ENCODE measurements at regions of chr19 and their contacts with region 1.

Region 1: DNA sequence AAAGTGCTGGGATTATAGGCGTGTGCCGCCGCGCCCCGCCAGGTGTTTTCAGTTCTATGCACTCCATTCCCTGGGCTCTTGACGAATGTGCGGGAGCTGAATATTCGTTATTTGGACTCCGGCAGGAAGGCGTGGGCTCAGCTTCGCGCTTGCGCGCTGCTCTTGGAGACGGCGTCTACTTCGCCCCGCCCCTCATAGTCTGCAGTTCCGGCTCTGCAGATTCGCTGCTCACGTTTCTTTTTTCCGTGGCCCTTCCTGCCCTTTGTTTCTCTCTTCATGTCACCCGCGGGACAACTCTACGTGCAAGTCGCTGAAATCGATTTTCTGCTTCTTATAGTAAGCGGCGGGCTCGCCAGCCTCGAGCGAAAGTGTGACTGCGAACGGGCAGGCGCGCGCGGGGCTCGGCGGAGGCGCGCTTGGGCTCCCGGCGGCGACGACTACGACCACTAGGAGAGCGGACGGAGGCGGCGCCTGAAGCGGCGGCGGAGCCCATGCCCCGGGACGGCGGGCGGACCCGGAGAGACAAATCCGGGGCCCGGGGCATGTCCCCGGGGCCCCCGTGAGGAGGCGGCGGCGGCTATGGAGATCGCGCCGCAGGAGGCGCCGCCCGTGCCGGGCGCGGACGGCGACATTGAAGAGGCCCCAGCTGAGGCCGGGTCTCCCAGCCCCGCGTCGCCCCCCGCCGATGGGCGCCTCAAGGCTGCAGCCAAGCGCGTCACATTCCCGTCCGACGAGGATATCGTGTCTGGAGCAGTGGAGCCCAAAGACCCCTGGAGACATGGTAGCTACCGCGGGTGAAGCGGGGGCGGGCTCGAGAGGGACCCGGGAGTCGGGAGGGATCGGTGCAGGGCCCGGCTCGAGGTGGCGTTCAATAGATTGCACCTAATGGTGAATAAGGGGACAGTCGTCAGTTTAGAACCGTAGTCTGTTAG is at the start of gene PPP1R37:
- DNase-seq: peak; percentile 95
- H3K4me3 Mint-ChIP-seq: peak within 1 kb of the TSS; percentile 86
- H3K27ac Mint-ChIP-seq: peak within 1 kb of the TSS; percentile 97
- H3K4me1 Mint-ChIP-seq: peaks cover 46% of the 10 kb centered on the region
- H3K27me3 Mint-ChIP-seq: no peaks in the 10 kb centered on the region
- total RNA-seq, gene PPP1R37: 12.7 to 13.1 TPM

Region 2: GRCh38 chr19:44943801-44944249 is 149.2 kb before region 1 on chr19:
- CTCF ChIA-PET with region 1: no interaction called
- POLR2A ChIA-PET with region 1: no interaction called
- intact Hi-C with region 1: no loop called
- DNase-seq: no peak
- H3K4me3 Mint-ChIP-seq: no peak overlapping the region
- H3K27ac Mint-ChIP-seq: no peak overlapping the region
- H3K4me1 Mint-ChIP-seq: no peaks in the 10 kb centered on the region
- H3K27me3 Mint-ChIP-seq: no peaks in the 10 kb centered on the region

Region 3: GRCh38 chr19:45125926-45126493 is 33.0 kb after region 1 on chr19:
- CTCF ChIA-PET with region 1: interaction called, 20 read pairs
- POLR2A ChIA-PET with region 1: interaction called, 6 read pairs
- intact Hi-C with region 1: loop called (anchors 1 kb)
- DNase-seq: peak; percentile 82
- H3K4me3 Mint-ChIP-seq: no peak overlapping the region
- H3K27ac Mint-ChIP-seq: no peak overlapping the region
- H3K4me1 Mint-ChIP-seq: peaks cover 17% of the 10 kb centered on the region
- H3K27me3 Mint-ChIP-seq: no peaks in the 10 kb centered on the region

Region 4: DNA sequence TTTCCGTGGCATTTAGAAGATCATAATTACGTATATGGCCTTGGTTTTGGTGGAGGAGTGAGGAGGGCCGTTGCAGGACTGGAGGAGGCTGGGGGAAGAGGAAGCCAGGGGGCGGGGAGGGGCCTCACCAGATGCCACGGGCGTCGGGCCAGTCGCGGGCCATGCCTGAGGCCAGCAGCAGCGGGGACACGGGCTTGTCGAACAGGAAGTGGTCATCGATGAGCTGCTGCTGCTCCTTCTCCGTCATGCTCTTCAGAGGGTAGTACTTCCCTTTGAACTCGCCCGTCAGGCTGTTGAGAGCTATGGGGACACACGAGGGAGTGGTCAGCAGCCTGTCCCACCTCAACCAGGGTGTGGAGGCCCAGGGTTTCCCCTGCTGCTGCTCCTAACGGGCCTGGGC is 218.6 kb after region 1 on chr19:
- CTCF ChIA-PET with region 1: no interaction called
- POLR2A ChIA-PET with region 1: no interaction called
- intact Hi-C with region 1: no loop called
- DNase-seq: no peak
- H3K4me3 Mint-ChIP-seq: no peak overlapping the region
- H3K27ac Mint-ChIP-seq: no peak overlapping the region
- H3K4me1 Mint-ChIP-seq: no peaks in the 10 kb centered on the region
- H3K27me3 Mint-ChIP-seq: peaks cover 9% of the 10 kb centered on the region

Region 5: DNA sequence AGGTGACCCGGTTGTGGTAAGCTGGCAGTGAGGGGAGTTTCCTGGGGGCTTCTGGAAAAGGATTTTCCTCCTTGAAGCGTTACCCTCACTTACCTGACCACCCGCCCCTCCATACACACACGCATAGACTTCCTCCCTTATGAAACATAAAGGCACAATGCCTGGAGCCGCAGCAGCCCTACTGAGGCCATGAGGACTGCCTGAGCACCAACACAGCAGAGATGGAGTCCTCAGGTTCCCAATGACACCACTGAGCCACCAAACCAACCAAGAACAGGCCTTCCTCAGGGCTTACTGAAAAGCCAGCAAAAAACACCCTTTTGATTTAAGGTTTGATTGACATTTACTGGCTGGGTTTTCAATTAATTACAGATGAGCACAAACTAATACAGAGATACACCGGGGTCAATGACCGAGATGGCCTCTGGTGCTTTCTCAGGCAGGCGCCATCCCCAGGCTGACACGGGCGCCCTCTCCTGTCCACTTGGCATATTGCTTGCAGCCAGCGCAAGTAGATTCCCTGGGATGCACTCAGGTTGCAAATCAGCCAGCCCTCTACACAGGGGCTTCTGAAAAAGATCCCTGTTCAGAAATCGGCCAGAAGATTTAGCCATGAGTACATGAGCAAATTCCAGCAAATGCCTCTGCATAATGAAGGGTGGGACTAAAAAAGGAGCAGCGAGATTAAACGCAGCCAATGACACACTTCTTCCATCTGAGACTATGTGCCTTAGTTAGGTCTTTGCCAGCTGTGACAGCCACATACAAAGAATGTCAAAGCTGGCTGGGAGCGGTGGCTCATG is 476.8 kb after region 1 on chr19:
- CTCF ChIA-PET with region 1: no interaction called
- POLR2A ChIA-PET with region 1: no interaction called
- intact Hi-C with region 1: no loop called
- DNase-seq: peak; percentile 79
- H3K4me3 Mint-ChIP-seq: no peak overlapping the region
- H3K27ac Mint-ChIP-seq: no peak overlapping the region
- H3K4me1 Mint-ChIP-seq: peaks cover 5% of the 10 kb centered on the region
- H3K27me3 Mint-ChIP-seq: no peaks in the 10 kb centered on the region

Measured in activated CD4-positive, alpha-beta memory T cell treated with anti-CD3 and anti-CD28 coated beads for 36 hours (primary cell).